Kidney (tissue), 22 donors: ENCODE measurements at regions of chr11 and their contacts with region 1.

Region 1: DNA sequence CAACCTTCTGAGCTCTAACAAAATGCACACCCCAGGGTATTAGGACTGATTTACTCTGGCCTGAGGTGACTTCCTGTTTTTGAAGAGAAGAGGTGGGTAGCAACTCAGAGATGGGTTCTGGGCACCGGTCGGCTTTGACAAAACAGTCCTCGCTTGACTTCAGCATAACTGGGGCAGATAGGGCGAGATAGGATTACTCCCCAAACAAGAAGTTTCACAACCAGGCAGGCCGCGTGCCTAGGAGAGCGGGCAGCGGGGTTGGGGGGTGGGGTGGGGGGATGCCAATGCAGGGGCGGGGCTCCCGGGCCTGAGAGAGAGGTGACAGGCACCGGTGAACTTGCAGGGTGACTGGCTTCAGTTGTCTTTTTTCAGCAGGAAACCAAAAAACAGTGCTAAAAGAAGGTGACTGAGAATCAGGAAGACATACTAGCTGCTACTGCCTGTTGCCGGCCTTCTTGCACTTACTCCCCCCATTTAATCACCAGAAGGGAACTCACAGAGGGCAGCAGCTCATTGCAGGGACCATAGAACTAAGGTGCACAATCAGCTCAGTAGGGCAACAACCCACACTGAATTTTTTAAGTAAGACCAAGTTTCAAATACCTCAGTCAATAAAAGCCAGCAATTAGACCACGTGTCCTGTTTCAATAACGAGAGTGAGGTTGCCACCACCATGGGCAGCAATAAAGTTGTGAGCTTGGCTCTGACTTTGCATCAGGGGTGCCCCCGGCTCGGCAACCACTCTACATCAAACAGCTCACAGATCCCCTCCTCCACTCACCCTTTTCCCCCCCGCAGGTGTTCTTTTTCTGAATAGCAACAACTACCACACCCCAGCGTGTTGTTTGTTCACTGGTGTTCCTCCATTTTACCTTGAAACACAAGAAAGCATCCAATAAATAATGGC is 37.2 kb upstream of the ETS1 start:
- DNase-seq: peak; percentile 36 to 64 (median 53)
- H3K4me3 ChIP-seq: no peak overlapping the region
- H3K27ac ChIP-seq: no peak overlapping the region
- H3K4me1 ChIP-seq: peaks cover 2 to 8% (median 2%) of the 10 kb centered on the region in 3 donors
- H3K27me3 ChIP-seq: no peaks in the 10 kb centered on the region
- CTCF ChIP-seq: no peak

Region 2: DNA sequence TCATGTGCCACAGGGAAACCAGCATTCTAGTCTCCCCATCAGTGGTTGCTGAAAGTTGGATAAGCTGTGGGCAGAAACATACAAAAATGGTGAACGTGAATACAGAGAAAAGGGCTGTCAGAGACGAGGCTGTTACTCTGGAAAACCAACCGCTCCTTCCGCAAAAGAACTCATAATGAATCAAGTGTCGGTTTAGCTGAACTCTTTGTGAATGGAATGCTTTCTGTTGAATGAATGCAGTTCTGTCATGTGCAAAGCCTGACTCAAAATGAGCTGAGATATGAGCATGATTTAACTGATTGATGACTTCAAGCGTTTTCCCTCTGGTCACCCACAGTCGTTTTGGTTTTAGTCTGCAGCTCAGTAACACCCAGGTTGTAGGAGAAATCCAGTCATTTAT is 335.5 kb before region 1 on chr11:
- intact Hi-C with region 1: loop called (anchors 5 kb)
- DNase-seq: no peak
- H3K4me3 ChIP-seq: no peak overlapping the region
- H3K27ac ChIP-seq: no peak overlapping the region
- H3K4me1 ChIP-seq: peaks cover 0 to 6% (median 0%) of the 10 kb centered on the region in 3 donors
- H3K27me3 ChIP-seq: no peaks in the 10 kb centered on the region
- CTCF ChIP-seq: no peak

Region 3: DNA sequence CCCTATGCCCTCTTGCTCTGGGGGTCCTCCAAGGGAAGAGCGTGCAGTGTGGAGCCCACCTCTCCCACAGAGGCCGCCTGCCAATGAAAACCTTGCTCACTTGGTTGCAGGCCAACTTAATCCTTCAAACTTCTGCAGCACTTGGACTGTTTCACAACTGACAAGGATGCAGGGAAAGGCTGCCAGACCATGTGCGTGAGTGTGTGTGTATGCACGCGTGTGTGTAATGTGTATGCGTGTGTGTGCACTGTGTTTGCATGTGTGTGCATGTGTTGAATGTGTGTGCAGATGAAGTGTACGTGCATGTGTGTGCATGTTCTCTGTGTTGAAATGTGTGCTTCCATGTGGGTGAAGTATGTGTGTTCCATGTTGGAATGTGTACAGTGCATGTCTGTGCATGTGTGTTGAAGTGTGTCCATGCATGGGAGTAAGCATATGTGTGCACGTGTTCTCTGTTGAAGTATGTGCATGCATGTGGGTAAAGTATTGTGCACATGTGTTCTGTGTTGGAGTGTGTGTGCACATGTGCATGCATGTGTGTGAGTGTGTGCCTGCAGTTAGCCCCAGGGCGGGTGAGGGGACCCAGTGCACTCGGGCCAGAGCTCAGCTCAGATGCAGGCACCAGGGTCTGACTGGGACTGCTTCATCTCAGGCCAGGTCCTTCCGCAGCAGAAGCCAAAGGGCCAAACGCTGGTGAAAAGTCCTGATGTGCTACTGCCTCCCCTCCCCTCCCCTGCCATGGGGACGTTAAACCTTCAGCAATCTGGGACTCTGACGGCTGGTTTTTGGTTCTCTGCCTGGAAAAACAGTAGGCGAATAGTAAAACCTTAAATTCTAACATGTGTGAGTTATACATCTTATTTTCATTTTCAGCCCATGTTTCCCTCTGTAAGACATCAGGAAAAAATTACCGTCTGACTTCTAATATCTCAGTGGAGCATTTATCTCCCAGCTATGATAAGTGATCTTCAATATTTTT is 141.3 kb after region 1 on chr11:
- intact Hi-C with region 1: no loop called
- DNase-seq: peak in 3 of 5 donors; percentile 41 to 91 (median 74)
- H3K4me3 ChIP-seq: peak overlapping the region in 1 of 3 donors; percentile 18
- H3K27ac ChIP-seq: no peak overlapping the region
- H3K4me1 ChIP-seq: peaks cover 0 to 17% (median 4%) of the 10 kb centered on the region in 3 donors
- H3K27me3 ChIP-seq: no peaks in the 10 kb centered on the region
- CTCF ChIP-seq: no peak